ENCODE measurements at regions of chr1 and their contacts with region 1.

Region 1: GRCh38 chr1:32716312-32717148 is 14.0 kb upstream of the SYNC start:
- DNase-seq: no peak
- H3K4me3 ChIP-seq: no peak overlapping the region
- H3K27me3 ChIP-seq: no peaks in the 10 kb centered on the region
- CTCF ChIP-seq: no peak

Region 2: DNA sequence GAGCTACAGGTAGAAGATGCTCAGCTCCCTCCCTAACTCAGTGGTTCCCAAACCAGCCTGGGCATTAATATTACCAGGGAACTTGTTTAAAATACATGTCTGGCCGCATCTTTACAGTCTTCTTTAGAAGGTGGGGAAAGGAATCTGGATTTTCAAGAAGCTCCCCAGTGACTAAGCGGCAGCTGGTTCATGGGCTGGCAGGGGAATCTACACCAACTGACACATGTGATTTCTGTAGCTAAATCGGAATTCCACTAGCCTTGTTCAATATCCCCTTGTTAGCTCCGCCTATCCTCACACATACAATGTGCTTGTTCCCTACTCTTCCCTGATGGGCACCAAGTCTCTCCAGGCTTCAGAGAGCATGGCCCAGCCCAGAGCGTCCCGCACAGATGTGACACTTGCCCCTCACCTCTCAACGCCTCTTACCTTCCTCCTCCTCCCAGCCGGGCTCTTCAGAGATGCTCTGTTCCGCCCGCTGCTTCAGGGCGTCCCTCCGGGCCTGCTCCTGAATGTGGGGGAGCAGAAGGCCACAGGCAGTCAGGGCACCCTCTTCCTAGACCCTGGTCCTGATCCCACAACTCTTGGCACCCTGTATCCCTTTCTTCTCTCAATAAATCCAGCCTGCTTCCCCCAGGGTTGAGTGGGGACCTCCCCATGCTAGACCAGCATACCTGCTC is 338.8 kb before region 1 on chr1:
- CTCF ChIA-PET with region 1: no interaction called
- POLR2A ChIA-PET with region 1: no interaction called
- DNase-seq: no peak
- H3K4me3 ChIP-seq: no peak overlapping the region
- H3K27me3 ChIP-seq: no peaks in the 10 kb centered on the region
- CTCF ChIP-seq: no peak

Region 3: DNA sequence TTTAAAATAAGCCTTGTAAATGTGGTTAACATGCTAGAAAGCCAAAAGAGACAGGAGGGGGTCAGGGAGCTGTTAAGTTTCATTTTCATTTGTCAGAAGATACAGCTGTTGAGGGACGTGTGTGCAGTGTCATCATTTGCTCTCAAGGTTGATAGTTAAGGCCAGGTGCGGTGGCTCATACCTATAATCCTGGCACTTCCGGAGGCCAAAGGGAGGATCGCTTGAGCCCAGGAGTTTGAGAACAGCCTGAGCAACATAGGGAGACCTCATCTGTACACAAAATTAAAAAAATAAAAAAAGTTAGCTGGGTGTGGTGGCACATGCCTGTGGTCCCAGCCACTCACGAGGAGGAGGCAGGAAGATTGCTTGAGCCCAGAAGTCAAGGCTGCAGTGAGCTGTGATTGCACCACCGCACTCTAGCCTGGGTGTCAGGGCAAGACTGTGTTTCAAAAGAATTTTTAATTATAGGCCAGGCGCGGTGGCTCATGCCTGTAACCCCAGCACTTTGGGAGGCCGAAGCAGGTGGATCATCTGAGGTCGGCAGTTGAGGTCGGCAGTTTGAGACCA is 88.9 kb before region 1 on chr1:
- CTCF ChIA-PET with region 1: no interaction called
- POLR2A ChIA-PET with region 1: no interaction called
- DNase-seq: no peak
- H3K4me3 ChIP-seq: no peak overlapping the region
- H3K27me3 ChIP-seq: no peaks in the 10 kb centered on the region
- CTCF ChIP-seq: no peak

Region 4: GRCh38 chr1:32753532-32754312 is 37.2 kb after region 1 on chr1:
- CTCF ChIA-PET with region 1: interaction called, 11 read pairs
- POLR2A ChIA-PET with region 1: no interaction called
- DNase-seq: no peak
- H3K4me3 ChIP-seq: peak overlapping the region; percentile 46
- H3K27me3 ChIP-seq: peaks cover 2% of the 10 kb centered on the region
- CTCF ChIP-seq: no peak